MCF 10A (cell line): ENCODE measurements at regions of chr2 and their contacts with region 1.

Region 1: DNA sequence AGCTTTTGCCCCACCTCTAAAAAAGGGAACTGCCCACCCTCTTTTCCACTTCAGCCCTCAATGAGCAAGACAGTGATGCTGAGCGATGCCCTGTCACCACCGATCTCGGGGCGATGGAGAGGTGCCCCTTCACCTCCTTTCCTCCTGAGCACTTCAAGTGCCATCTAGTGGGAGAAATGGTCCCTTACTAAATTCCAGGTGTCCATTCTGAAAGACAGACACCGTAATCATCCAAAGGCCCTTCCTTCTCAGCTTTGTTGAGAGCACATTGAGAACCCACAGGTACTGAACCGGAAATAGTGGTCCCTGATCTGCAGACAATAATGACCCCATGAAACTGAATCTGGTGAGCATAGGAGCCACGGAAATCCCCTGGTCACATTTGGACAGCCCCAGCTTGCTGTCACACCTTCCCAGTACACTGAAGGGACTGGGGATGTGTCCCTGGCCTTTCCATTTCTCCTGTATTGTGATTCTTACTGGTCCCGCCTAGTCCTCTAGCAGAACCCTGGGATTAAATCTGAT is 38.5 kb downstream of the KCTD18 start:
- DNase-seq: peak; percentile 36
- H3K4me3 Mint-ChIP-seq: no peak overlapping the region
- H3K27ac Mint-ChIP-seq: peak overlapping the region; percentile 11
- H3K4me1 Mint-ChIP-seq: no peaks in the 10 kb centered on the region
- H3K27me3 Mint-ChIP-seq: no peaks in the 10 kb centered on the region
- CTCF ChIP-seq: peak; percentile 45

Region 2: GRCh38 chr2:199979832-199980628 is 491.4 kb before region 1 on chr2:
- CTCF ChIA-PET with region 1: interaction called, 29 read pairs
- POLR2A ChIA-PET with region 1: interaction called, 3 read pairs
- intact Hi-C with region 1: loop called (anchors 1 kb)
- DNase-seq: peak; percentile 82
- H3K4me3 Mint-ChIP-seq: no peak overlapping the region
- H3K27ac Mint-ChIP-seq: peak overlapping the region; percentile 59
- H3K4me1 Mint-ChIP-seq: peaks cover 29% of the 10 kb centered on the region
- H3K27me3 Mint-ChIP-seq: no peaks in the 10 kb centered on the region
- CTCF ChIP-seq: peak; percentile 78

Region 3: GRCh38 chr2:199985625-199986207 is 485.7 kb before region 1 on chr2:
- CTCF ChIA-PET with region 1: interaction called, 28 read pairs
- POLR2A ChIA-PET with region 1: no interaction called
- intact Hi-C with region 1: loop called (anchors 1 kb)
- DNase-seq: peak; percentile 83
- H3K4me3 Mint-ChIP-seq: no peak overlapping the region
- H3K27ac Mint-ChIP-seq: no peak overlapping the region
- H3K4me1 Mint-ChIP-seq: peaks cover 6% of the 10 kb centered on the region
- H3K27me3 Mint-ChIP-seq: no peaks in the 10 kb centered on the region
- CTCF ChIP-seq: peak; percentile 64